Activated CD8-positive, alpha-beta T cell treated with anti-CD3 and anti-CD28 coated beads for 36 hours (primary cell): ENCODE measurements at regions of chr17 and their contacts with region 1.

Region 1: DNA sequence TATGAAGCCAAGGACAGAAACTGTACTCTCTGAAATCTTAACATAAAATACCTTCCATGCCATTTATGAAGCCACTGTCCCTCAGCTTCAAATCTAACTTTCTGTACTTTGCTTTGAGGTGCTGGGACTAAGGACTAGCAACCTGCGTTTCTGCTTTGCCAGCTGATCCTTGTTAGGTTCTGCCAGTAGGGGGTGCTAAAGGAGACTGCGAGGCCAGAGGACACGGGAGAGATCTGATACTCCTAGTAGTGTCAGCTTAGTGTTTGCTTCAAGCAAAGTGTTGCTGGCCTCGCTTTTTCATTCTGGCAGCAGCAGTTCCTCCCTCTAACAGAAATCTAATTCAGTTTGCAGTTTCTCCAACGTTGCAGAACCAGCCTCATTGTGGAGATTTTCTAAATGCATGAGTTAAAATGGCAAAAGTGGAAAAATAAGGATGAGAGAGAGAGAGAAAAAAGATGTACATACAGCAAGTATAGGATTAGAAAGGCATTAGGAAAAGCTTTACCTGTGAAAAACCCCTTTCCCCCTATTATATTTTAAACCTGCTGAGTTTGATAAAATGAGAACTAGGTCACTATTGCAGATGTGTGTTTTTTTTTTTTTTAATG is 297.5 kb downstream of the CA10 start:
- DNase-seq: peak; percentile 31
- ATAC-seq: no peak
- H3K4me3 Mint-ChIP-seq: no peak overlapping the region
- H3K27ac Mint-ChIP-seq: no peak overlapping the region
- H3K4me1 Mint-ChIP-seq: no peaks in the 10 kb centered on the region
- H3K27me3 Mint-ChIP-seq: no peaks in the 10 kb centered on the region
- CTCF ChIP-seq: peak; percentile 49

Region 2: GRCh38 chr17:52106638-52107261 is 245.7 kb after region 1 on chr17:
- CTCF ChIA-PET with region 1: no interaction called
- POLR2A ChIA-PET with region 1: no interaction called
- intact Hi-C with region 1: loop called (anchors 10 kb)
- DNase-seq: peak; percentile 65
- ATAC-seq: no peak
- H3K4me3 Mint-ChIP-seq: no peak overlapping the region
- H3K27ac Mint-ChIP-seq: no peak overlapping the region
- H3K4me1 Mint-ChIP-seq: no peaks in the 10 kb centered on the region
- H3K27me3 Mint-ChIP-seq: peaks cover 11% of the 10 kb centered on the region
- CTCF ChIP-seq: peak; percentile 89